ENCODE measurements at regions of chr18 and their contacts with region 1.

Region 1: GRCh38 chr18:8841781-8842485 is 136.6 kb downstream of the MTCL1 start:
- DNase-seq: no peak
- H3K4me3 ChIP-seq: no peak overlapping the region
- H3K27me3 ChIP-seq: no peaks in the 10 kb centered on the region
- CTCF ChIP-seq: no peak

Region 2: DNA sequence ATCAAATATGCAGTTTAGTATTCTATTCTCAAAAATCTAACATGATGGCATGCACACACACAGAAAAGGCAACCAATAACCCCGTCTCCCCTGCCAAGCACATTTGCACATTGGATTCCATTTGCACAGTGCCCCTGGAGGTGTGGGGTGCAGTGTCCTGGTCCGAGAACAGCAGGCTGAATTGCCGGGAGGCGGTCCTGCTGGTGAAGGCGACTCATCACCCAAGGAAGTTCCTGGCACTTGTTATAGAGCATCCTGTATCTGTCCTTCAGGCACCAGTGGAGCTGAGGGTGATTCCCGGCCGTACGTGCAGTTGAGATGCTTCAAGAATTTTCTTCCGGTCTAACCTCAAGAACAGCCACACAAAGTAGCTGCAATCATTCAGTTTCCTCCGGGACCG is 305.7 kb before region 1 on chr18:
- CTCF ChIA-PET with region 1: no interaction called
- POLR2A ChIA-PET with region 1: no interaction called
- DNase-seq: no peak
- H3K4me3 ChIP-seq: no peak overlapping the region
- H3K27me3 ChIP-seq: no peaks in the 10 kb centered on the region
- CTCF ChIP-seq: no peak

Region 3: GRCh38 chr18:8830067-8831060 is 11.6 kb before region 1 on chr18:
- CTCF ChIA-PET with region 1: interaction called, 11 read pairs
- POLR2A ChIA-PET with region 1: interaction called, 3 read pairs
- DNase-seq: no peak
- H3K4me3 ChIP-seq: no peak overlapping the region
- H3K27me3 ChIP-seq: no peaks in the 10 kb centered on the region
- CTCF ChIP-seq: no peak